Activated CD8-positive, alpha-beta T cell treated with anti-CD3 and anti-CD28 coated beads, Interleukin-2, amount 10 ng/mL, durations not matched to agents 7 days and 5 days (primary cell): ENCODE measurements at regions of chr6 and their contacts with region 1.

Region 1: DNA sequence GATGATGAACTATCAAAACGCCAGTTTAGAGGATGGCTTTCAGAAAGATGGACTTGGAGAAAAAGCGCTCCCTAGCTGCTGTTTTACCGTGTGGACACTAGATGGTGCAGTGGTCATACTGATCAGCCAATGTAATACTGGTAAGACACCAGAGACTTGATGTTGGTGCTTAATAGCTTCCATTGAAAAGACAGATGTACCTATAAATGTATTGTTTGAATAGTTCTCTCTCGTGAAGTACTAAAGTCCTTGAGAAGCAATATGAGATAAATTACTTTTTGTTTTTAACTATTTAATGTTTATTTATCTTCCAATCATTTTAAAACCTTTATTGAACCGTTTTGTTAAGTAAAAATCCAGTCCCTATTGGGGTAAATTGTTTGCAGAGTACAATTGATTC is 63.9 kb upstream of the FUCA2 start:
- DNase-seq: peak; percentile 73
- ATAC-seq: peak; percentile 82
- H3K4me3 Mint-ChIP-seq: no peak overlapping the region
- H3K27ac Mint-ChIP-seq: no peak overlapping the region
- H3K4me1 Mint-ChIP-seq: no peaks in the 10 kb centered on the region
- H3K27me3 Mint-ChIP-seq: no peaks in the 10 kb centered on the region

Region 2: GRCh38 chr6:143450453-143451371 is 124.7 kb before region 1 on chr6 and contains the starts of genes ADAT2 and PEX3:
- CTCF ChIA-PET with region 1: no interaction called
- POLR2A ChIA-PET with region 1: no interaction called
- DNase-seq: peak; percentile 95
- ATAC-seq: peak; percentile 97
- H3K4me3 Mint-ChIP-seq: peak within 1 kb of the TSS; percentile 99
- H3K27ac Mint-ChIP-seq: peak within 1 kb of the TSS; percentile 100
- H3K4me1 Mint-ChIP-seq: peaks cover 23% of the 10 kb centered on the region
- H3K27me3 Mint-ChIP-seq: no peaks in the 10 kb centered on the region
- total RNA-seq, gene ADAT2: 21.4 to 22.0 TPM
- total RNA-seq, gene PEX3: 14.5 to 15.1 TPM

Region 3: GRCh38 chr6:143510991-143511891 is 64.2 kb before region 1 on chr6 and contains the start of gene FUCA2:
- CTCF ChIA-PET with region 1: interaction called, 13 read pairs
- POLR2A ChIA-PET with region 1: no interaction called
- DNase-seq: peak; percentile 76
- ATAC-seq: peak; percentile 85
- H3K4me3 Mint-ChIP-seq: peak within 1 kb of the TSS; percentile 82
- H3K27ac Mint-ChIP-seq: peak within 1 kb of the TSS; percentile 94
- H3K4me1 Mint-ChIP-seq: peaks cover 20% of the 10 kb centered on the region
- H3K27me3 Mint-ChIP-seq: no peaks in the 10 kb centered on the region
- total RNA-seq, gene FUCA2: 10.7 to 13.8 TPM

Region 4: GRCh38 chr6:143556529-143556928 is 18.9 kb before region 1 on chr6:
- CTCF ChIA-PET with region 1: interaction called, 10 read pairs
- POLR2A ChIA-PET with region 1: no interaction called
- DNase-seq: no peak
- ATAC-seq: no peak
- H3K4me3 Mint-ChIP-seq: no peak overlapping the region
- H3K27ac Mint-ChIP-seq: no peak overlapping the region
- H3K4me1 Mint-ChIP-seq: peaks cover 46% of the 10 kb centered on the region
- H3K27me3 Mint-ChIP-seq: no peaks in the 10 kb centered on the region

Region 5: GRCh38 chr6:143598466-143599080 is 23.1 kb after region 1 on chr6:
- CTCF ChIA-PET with region 1: interaction called, 10 read pairs
- POLR2A ChIA-PET with region 1: no interaction called
- DNase-seq: peak; percentile 51
- ATAC-seq: peak; percentile 82
- H3K4me3 Mint-ChIP-seq: no peak overlapping the region
- H3K27ac Mint-ChIP-seq: peak overlapping the region; percentile 71
- H3K4me1 Mint-ChIP-seq: peaks cover 16% of the 10 kb centered on the region
- H3K27me3 Mint-ChIP-seq: no peaks in the 10 kb centered on the region

Region 6: DNA sequence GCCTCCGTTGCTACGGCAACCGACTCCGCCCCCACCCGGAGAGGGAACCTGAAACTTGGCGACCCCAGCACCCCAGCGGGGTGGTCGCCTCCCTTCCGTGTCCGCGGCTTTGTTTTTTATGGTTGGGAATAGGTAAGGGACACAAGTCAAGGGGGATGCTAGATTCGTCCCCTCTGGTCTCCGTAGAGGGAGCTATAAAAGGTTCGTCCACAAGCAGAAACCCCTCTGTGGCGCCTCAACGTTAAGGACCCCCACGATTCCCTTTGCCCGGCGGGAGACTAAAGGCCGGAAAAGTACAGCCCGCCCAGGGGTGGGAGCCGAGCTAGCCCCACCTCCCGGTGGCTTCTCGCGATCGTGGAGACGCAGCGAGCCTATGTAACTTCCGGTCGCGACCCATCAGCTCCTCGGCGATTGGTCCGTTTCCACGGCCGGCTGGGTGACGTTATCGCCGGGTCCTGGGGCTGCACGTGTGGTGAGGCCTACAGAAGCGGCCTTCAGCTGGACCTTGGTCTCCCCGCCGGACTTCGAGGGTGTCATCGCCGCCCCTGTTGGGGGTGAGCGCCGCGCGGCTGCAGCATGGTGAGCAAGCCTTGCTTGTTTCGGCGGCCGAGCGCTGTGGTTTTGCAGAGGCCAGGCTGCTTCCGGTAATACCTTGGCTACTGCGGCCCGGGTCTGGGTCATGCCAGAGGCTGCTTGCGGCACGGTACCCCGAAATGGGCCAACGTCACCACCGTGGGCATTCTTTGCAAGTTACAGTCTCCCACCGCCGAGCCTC is 267.6 kb after region 1 on chr6 and contains the start of gene LTV1:
- CTCF ChIA-PET with region 1: interaction called, 23 read pairs
- POLR2A ChIA-PET with region 1: no interaction called
- DNase-seq: peak; percentile 96
- ATAC-seq: peak; percentile 97
- H3K4me3 Mint-ChIP-seq: peak within 1 kb of the TSS; percentile 95
- H3K27ac Mint-ChIP-seq: peak within 1 kb of the TSS; percentile 97
- H3K4me1 Mint-ChIP-seq: peaks cover 16% of the 10 kb centered on the region
- H3K27me3 Mint-ChIP-seq: no peaks in the 10 kb centered on the region
- total RNA-seq, gene LTV1: 25.5 to 26.8 TPM

Region 7: DNA sequence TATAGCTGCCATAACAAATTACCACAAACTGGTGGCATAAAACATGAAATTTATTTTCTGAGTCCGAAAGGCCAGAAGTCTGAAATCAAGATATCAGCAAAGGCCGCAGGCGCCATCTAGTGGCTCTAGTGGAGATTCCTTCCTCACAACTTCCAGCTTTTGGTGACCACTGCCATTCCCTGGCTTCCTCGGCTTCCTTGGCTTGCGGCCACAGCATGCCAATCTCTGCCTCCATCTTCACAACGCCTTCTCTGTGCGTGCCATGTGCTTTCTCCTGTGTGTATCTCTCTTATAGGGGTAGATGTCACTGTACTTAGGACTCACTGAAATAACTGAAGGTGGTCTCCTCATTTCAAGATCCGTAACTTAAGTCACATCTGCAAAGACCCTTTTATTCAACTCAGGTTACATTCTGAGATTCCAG is 438.1 kb after region 1 on chr6:
- CTCF ChIA-PET with region 1: interaction called, 63 read pairs
- POLR2A ChIA-PET with region 1: interaction called, 3 read pairs
- DNase-seq: peak; percentile 67
- ATAC-seq: no peak
- H3K4me3 Mint-ChIP-seq: no peak overlapping the region
- H3K27ac Mint-ChIP-seq: no peak overlapping the region
- H3K4me1 Mint-ChIP-seq: peaks cover 5% of the 10 kb centered on the region
- H3K27me3 Mint-ChIP-seq: peaks cover 15% of the 10 kb centered on the region

Region 8: GRCh38 chr6:144036064-144036834 is 460.8 kb after region 1 on chr6:
- CTCF ChIA-PET with region 1: interaction called, 10 read pairs
- POLR2A ChIA-PET with region 1: no interaction called
- DNase-seq: peak; percentile 51
- ATAC-seq: peak; percentile 85
- H3K4me3 Mint-ChIP-seq: peak overlapping the region; percentile 46
- H3K27ac Mint-ChIP-seq: peak overlapping the region; percentile 62
- H3K4me1 Mint-ChIP-seq: peaks cover 18% of the 10 kb centered on the region
- H3K27me3 Mint-ChIP-seq: no peaks in the 10 kb centered on the region